AG04450 (cell line): ENCODE measurements at regions of chr3 and their contacts with region 1.

Region 1: GRCh38 chr3:101703169-101703568 is 16.7 kb upstream of the RPL24 start:
- DNase-seq: no peak
- H3K4me3 ChIP-seq: no peak overlapping the region
- H3K27ac ChIP-seq: no peak overlapping the region
- H3K27me3 ChIP-seq: no peaks in the 10 kb centered on the region
- CTCF ChIP-seq: no peak

Region 2: DNA sequence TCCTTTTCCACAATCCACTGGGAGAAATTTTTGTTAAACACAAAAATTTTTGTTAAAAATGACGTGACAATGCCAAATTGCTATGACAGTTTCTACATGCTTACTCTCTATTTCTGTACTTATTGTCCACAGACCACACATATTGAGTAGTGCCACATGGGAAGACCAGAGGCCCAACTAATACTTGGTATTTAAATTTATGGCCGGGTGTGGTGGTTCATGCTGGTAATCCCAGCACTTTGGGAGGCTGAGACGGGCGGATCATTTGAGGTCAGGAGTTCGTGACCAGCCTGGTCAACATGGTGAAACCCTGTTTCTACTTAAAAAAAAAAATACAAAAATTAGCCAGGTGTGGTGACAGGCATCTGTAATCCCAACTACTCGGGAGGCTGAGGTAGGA is 46.5 kb before region 1 on chr3:
- CTCF ChIA-PET with region 1: no interaction called
- POLR2A ChIA-PET with region 1: no interaction called
- DNase-seq: no peak
- H3K4me3 ChIP-seq: no peak overlapping the region
- H3K27ac ChIP-seq: no peak overlapping the region
- H3K27me3 ChIP-seq: no peaks in the 10 kb centered on the region
- CTCF ChIP-seq: no peak

Region 3: GRCh38 chr3:101676765-101677435 is 26.3 kb before region 1 on chr3 and contains the start of gene ZBTB11:
- CTCF ChIA-PET with region 1: interaction called, 14 read pairs
- POLR2A ChIA-PET with region 1: no interaction called
- DNase-seq: peak; percentile 100
- H3K4me3 ChIP-seq: peak within 1 kb of the TSS; percentile 96
- H3K27ac ChIP-seq: peak within 1 kb of the TSS; percentile 91
- H3K27me3 ChIP-seq: no peaks in the 10 kb centered on the region
- CTCF ChIP-seq: peak; percentile 69
- polyA plus RNA-seq, gene ZBTB11: 9.8 and 13.8 TPM in 2 replicates